Spleen (tissue), 13 donors: ENCODE measurements at regions of chr14 and their contacts with region 1.

Region 1: GRCh38 chr14:52824507-52824906 is 33.1 kb upstream of the GNPNAT1 start:
- DNase-seq: no peak
- H3K4me3 ChIP-seq: no peak overlapping the region
- H3K27ac ChIP-seq: no peak overlapping the region
- H3K4me1 ChIP-seq: peaks cover 0 to 19% (median 8%) of the 10 kb centered on the region in 6 donors
- H3K27me3 ChIP-seq: peaks cover 0 to 10% (median 0%) of the 10 kb centered on the region in 7 donors
- CTCF ChIP-seq: no peak
- POLR2A ChIP-seq: no peak

Region 2: GRCh38 chr14:52338051-52338681 is 486.3 kb before region 1 on chr14:
- intact Hi-C with region 1: no loop called
- DNase-seq: no peak
- H3K4me3 ChIP-seq: no peak overlapping the region
- H3K27ac ChIP-seq: no peak overlapping the region
- H3K4me1 ChIP-seq: peaks cover 0 to 14% (median 11%) of the 10 kb centered on the region in 6 donors
- H3K27me3 ChIP-seq: no peaks in the 10 kb centered on the region
- CTCF ChIP-seq: no peak
- POLR2A ChIP-seq: no peak

Region 3: GRCh38 chr14:52706724-52707706 is 117.5 kb before region 1 on chr14 and contains the start of gene PSMC6:
- intact Hi-C with region 1: no loop called
- DNase-seq: peak; percentile 99
- H3K4me3 ChIP-seq: peak within 1 kb of the TSS; percentile 78 to 91 (median 84)
- H3K27ac ChIP-seq: peak within 1 kb of the TSS; percentile 59 to 96 (median 94)
- H3K4me1 ChIP-seq: peaks cover 9 to 63% (median 32%) of the 10 kb centered on the region in 6 donors
- H3K27me3 ChIP-seq: no peaks in the 10 kb centered on the region
- CTCF ChIP-seq: peak in 2 of 11 experiments; percentile 14 to 23
- POLR2A ChIP-seq: no peak
- total RNA-seq, gene PSMC6: 64.7 to 95.7 (median 82.0) TPM

Region 4: GRCh38 chr14:52755607-52756253 is 68.8 kb before region 1 on chr14:
- intact Hi-C with region 1: no loop called
- DNase-seq: no peak
- H3K4me3 ChIP-seq: no peak overlapping the region
- H3K27ac ChIP-seq: no peak overlapping the region
- H3K4me1 ChIP-seq: no peaks in the 10 kb centered on the region
- H3K27me3 ChIP-seq: no peaks in the 10 kb centered on the region
- CTCF ChIP-seq: no peak
- POLR2A ChIP-seq: no peak

Region 5: GRCh38 chr14:52948039-52948438 is 123.5 kb after region 1 on chr14:
- intact Hi-C with region 1: no loop called
- DNase-seq: no peak
- H3K4me3 ChIP-seq: peak overlapping the region in 4 of 8 donors; percentile 70 to 82 (median 76)
- H3K27ac ChIP-seq: peak overlapping the region in 1 of 8 donors; percentile 5
- H3K4me1 ChIP-seq: peaks cover 9 to 58% (median 25%) of the 10 kb centered on the region in 6 donors
- H3K27me3 ChIP-seq: peaks cover 0 to 80% (median 35%) of the 10 kb centered on the region in 7 donors
- CTCF ChIP-seq: no peak
- POLR2A ChIP-seq: no peak

Region 6: GRCh38 chr14:52961060-52961639 is 136.6 kb after region 1 on chr14:
- intact Hi-C with region 1: loop called (anchors 5 kb)
- DNase-seq: no peak
- H3K4me3 ChIP-seq: no peak overlapping the region
- H3K27ac ChIP-seq: peak overlapping the region in 6 of 8 donors; percentile 4 to 61 (median 32)
- H3K4me1 ChIP-seq: peaks cover 0 to 14% (median 7%) of the 10 kb centered on the region in 6 donors
- H3K27me3 ChIP-seq: no peaks in the 10 kb centered on the region
- CTCF ChIP-seq: peak; percentile 38 to 71 (median 64)
- POLR2A ChIP-seq: no peak

Region 7: GRCh38 chr14:53055003-53055402 is 230.5 kb after region 1 on chr14:
- intact Hi-C with region 1: loop called (anchors 10 kb)
- DNase-seq: no peak
- H3K4me3 ChIP-seq: no peak overlapping the region
- H3K27ac ChIP-seq: no peak overlapping the region
- H3K4me1 ChIP-seq: peaks cover 0 to 3% (median 0%) of the 10 kb centered on the region in 6 donors
- H3K27me3 ChIP-seq: no peaks in the 10 kb centered on the region
- CTCF ChIP-seq: peak; percentile 37 to 83 (median 74)
- POLR2A ChIP-seq: no peak

Region 8: GRCh38 chr14:53295985-53296582 is 471.6 kb after region 1 on chr14:
- intact Hi-C with region 1: loop called (anchors 10 kb)
- DNase-seq: no peak
- H3K4me3 ChIP-seq: peak overlapping the region in 1 of 8 donors; percentile 29
- H3K27ac ChIP-seq: no peak overlapping the region
- H3K4me1 ChIP-seq: peaks cover 0 to 5% (median 0%) of the 10 kb centered on the region in 6 donors
- H3K27me3 ChIP-seq: no peaks in the 10 kb centered on the region
- CTCF ChIP-seq: peak; percentile 12 to 70 (median 47)
- POLR2A ChIP-seq: no peak